B cell (primary cell): ENCODE measurements at regions of chr19 and their contacts with region 1.

Region 1: GRCh38 chr19:8017808-8018207 is 12.4 kb upstream of the ELAVL1 start:
- DNase-seq: peak; percentile 71
- ATAC-seq: peak; percentile 98
- H3K4me3 ChIP-seq: no peak overlapping the region
- H3K4me3 Mint-ChIP-seq: no peak overlapping the region
- H3K27ac ChIP-seq: no peak overlapping the region
- H3K27ac Mint-ChIP-seq: peak overlapping the region; percentile 56
- H3K4me1 ChIP-seq: peaks cover 3 to 10% of the 10 kb centered on the region in 2 donors
- H3K4me1 Mint-ChIP-seq: peaks cover 11% of the 10 kb centered on the region
- H3K27me3 ChIP-seq: no peaks in the 10 kb centered on the region
- H3K27me3 Mint-ChIP-seq: no peaks in the 10 kb centered on the region
- CTCF ChIP-seq: peak; percentile 74

Region 2: DNA sequence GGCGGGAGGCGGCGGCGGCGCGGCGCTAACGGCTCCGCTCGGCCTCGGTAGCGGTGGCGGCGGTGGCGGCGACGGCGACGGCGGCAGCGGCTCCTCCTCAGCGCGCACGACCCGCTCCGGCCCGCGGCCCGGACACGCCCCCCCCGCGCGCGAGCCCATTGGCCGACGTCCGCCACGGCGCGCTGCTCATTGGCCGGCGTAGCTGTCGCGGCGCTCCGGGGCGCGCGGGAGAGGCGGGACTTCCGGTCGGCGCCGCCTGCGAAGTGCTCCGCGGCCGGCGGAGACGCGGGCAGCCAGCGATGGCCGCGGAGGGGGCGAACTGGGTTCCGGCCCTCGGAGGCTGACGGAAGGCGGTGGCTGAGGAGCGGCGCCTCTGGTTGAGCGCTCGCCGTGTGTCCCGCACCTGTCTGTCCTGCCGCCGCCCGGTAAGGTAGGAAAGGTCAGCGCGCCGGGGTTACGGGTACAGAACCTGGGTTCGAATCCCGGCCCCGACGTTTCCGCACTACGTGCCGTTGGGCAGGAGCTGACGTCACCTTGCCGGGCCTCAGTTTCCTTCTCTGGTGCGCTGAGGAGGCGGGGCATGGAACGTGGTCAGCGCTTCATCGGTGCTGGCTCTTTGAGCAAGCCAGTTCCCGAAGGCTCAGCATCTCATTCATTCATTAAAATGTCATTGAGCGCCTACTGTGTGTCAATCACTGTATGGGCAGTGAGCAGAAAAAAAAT is 12.1 kb before region 1 on chr19 and contains the start of gene ELAVL1:
- CTCF ChIA-PET with region 1: interaction called, 11 read pairs
- POLR2A ChIA-PET with region 1: interaction called, 5 read pairs
- intact Hi-C with region 1: no loop called
- DNase-seq: peak; percentile 93
- ATAC-seq: peak; percentile 92
- H3K4me3 ChIP-seq: peak within 1 kb of the TSS; percentile 74 to 88 (median 86)
- H3K4me3 Mint-ChIP-seq: peak within 1 kb of the TSS; percentile 95
- H3K27ac ChIP-seq: peak within 1 kb of the TSS; percentile 62 to 87
- H3K27ac Mint-ChIP-seq: peak within 1 kb of the TSS; percentile 85
- H3K4me1 ChIP-seq: peaks cover 25 to 42% of the 10 kb centered on the region in 2 donors
- H3K4me1 Mint-ChIP-seq: peaks cover 37% of the 10 kb centered on the region
- H3K27me3 ChIP-seq: no peaks in the 10 kb centered on the region
- H3K27me3 Mint-ChIP-seq: no peaks in the 10 kb centered on the region
- CTCF ChIP-seq: no peak
- total RNA-seq, gene ELAVL1: 58.3 and 63.5 TPM in 2 replicates

Region 3: GRCh38 chr19:8252922-8253589 is 235.2 kb after region 1 on chr19:
- CTCF ChIA-PET with region 1: interaction called, 3 read pairs
- POLR2A ChIA-PET with region 1: no interaction called
- intact Hi-C with region 1: loop called (anchors 2 kb)
- DNase-seq: peak; percentile 87
- ATAC-seq: peak; percentile 95
- H3K4me3 ChIP-seq: no peak overlapping the region
- H3K4me3 Mint-ChIP-seq: no peak overlapping the region
- H3K27ac ChIP-seq: peak overlapping the region in 1 of 2 donors; percentile 28
- H3K27ac Mint-ChIP-seq: no peak overlapping the region
- H3K4me1 ChIP-seq: peaks cover 5 to 7% of the 10 kb centered on the region in 2 donors
- H3K4me1 Mint-ChIP-seq: peaks cover 8% of the 10 kb centered on the region
- H3K27me3 ChIP-seq: no peaks in the 10 kb centered on the region
- H3K27me3 Mint-ChIP-seq: no peaks in the 10 kb centered on the region
- CTCF ChIP-seq: peak; percentile 98